Activated T-helper 2 cell treated with anti-CD3 and anti-CD28 coated beads, Interferon-gamma antibody, Interleukin-2, Interleukin-4, amounts not matched to agents 10 μg/mL and 5 μg/mL and 100 μg/mL, durations not matched to agents 14 hours and 24 hours and 36 hours (primary cell): ENCODE measurements at regions of chr12 and their contacts with region 1.

Region 1: DNA sequence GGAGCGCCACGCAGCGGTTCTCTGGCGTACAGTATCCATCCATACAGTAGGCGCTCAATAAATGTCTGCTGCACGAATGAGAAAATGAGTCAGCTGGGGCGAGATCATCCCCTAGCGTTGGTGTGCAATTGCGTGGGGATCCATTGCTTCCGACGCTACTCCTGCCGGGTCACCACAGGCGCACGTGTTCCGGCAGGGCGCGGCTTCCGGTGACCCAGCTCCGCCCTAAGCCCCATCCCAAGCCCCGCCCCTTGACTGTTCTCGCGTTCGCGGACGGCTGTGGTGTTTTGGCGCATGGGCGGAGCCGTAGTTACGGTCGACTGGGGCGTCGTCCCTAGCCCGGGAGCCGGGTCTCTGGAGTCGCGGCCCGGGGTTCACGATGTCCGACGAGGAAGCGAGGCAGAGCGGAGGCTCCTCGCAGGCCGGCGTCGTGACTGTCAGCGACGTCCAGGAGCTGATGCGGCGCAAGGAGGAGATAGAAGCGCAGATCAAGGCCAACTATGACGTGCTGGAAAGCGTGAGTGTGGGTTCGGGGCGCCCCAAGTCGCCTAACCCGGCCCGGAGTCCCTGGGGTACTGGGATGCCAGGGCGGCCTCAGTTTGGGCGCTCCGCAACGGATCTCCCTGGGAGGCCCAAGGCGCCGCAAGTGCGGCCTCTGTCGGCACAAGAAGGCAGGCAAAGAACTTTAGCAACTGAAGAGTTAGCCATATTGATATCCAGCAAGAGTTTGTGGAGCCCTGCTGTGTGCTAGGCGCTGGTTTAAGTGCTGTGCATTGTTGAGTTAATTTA is at the start of gene PSMD9:
- DNase-seq: peak; percentile 98
- H3K4me3 Mint-ChIP-seq: peak within 1 kb of the TSS; percentile 99
- H3K27ac Mint-ChIP-seq: peak within 1 kb of the TSS; percentile 99
- H3K4me1 Mint-ChIP-seq: peaks cover 22% of the 10 kb centered on the region
- H3K27me3 Mint-ChIP-seq: peaks cover 1% of the 10 kb centered on the region
- total RNA-seq, gene PSMD9: 65.2 and 71.0 TPM in 2 replicates

Region 2: DNA sequence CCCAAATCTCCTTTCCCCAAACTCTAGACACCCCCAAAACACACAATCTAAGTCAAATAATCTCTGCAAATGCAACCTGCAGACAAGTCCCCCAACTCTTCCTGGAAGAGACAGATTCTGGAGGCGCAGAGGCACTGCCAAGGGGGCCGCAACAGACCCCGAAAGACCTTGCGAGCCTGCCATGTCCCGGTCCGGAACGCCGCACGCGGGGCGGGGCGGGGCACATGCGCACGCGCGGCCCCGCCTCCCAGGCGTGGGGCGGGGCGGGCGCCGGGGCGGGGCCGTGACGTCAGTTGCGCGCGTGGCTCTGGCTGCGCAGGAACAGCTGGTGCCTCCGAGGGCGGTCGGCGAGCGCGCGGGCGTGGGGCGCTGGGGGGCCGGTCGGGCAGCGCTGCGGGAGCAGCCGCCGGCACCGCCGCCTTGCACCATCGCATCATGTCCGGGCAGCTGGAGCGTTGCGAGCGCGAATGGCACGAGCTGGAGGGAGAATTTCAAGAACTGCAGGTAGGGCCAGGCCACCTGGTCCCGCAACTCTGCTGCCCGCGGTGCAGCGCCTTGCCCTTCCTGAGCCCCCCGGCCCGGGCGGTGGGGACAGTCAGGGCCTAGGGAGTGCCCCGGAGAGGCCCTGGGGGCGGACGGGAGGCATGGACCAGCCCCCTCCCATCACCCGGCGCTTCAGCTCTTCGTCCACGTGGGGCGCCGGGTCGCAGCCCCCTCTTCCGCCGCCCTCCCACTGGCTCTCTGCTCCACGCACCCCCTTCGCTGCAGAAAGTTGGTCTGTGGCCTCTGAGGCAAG is 176.0 kb before region 1 on chr12 and contains the start of gene TMEM120B:
- intact Hi-C with region 1: loop called (anchors 10 kb)
- DNase-seq: peak; percentile 82
- H3K4me3 Mint-ChIP-seq: peak within 1 kb of the TSS; percentile 97
- H3K27ac Mint-ChIP-seq: peak within 1 kb of the TSS; percentile 85
- H3K4me1 Mint-ChIP-seq: peaks cover 18% of the 10 kb centered on the region
- H3K27me3 Mint-ChIP-seq: peaks cover 1% of the 10 kb centered on the region
- total RNA-seq, gene TMEM120B: 14.1 and 14.2 TPM in 2 replicates

Region 3: GRCh38 chr12:121802846-121803630 is 85.6 kb before region 1 on chr12:
- intact Hi-C with region 1: loop called (anchors 1 kb)
- DNase-seq: peak; percentile 90
- H3K4me3 Mint-ChIP-seq: peak overlapping the region; percentile 87
- H3K27ac Mint-ChIP-seq: peak overlapping the region; percentile 99
- H3K4me1 Mint-ChIP-seq: peaks cover 29% of the 10 kb centered on the region
- H3K27me3 Mint-ChIP-seq: no peaks in the 10 kb centered on the region

Region 4: DNA sequence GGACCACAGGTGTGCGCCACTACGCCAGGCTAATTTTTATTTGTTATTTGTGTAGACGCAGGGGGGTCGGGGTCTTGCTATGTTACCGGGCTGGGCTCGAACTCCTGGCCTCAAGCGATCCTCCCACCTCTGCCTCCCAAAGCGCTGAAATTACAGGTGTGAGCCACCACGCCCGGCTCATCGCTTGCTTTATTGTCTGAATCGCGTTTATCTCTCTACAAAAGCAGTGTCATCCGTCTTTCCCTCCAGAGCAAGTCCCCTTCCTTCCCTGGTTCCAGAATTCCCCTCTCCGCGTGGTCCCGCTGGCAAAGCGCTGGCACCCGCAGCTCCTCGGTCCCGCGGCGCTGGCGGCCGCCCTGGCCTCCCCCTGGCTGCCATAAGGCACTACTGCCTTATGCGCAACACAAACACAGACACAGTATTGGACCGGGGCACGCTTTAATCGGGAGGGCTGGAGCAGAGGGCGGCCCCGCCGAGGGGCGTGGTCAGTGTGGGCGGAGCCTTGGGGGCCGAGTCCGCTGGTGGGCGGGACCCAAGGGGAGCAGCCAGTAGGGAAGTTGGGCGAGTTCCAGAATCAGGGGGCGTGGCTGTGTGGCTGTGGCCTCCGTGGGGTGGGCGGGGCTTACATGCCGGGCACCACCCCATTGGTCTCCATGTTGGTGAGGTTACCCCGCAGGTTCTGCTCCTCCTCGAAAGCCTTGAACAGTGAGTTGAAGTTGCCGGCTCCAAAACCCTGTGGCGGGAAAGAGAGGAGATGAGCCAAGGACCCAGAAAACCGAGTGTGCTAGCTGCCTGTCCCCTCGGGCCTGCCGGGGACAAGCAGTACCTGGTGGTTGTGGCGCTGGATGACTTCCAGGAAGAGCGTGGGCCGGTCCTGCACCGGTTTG is 49.3 kb before region 1 on chr12:
- intact Hi-C with region 1: loop called (anchors 2 kb)
- DNase-seq: peak; percentile 99
- H3K4me3 Mint-ChIP-seq: peak overlapping the region; percentile 97
- H3K27ac Mint-ChIP-seq: peak overlapping the region; percentile 90
- H3K4me1 Mint-ChIP-seq: peaks cover 4% of the 10 kb centered on the region
- H3K27me3 Mint-ChIP-seq: no peaks in the 10 kb centered on the region

Region 5: GRCh38 chr12:121872546-121873215 is 16.0 kb before region 1 on chr12:
- intact Hi-C with region 1: no loop called
- DNase-seq: no peak
- H3K4me3 Mint-ChIP-seq: no peak overlapping the region
- H3K27ac Mint-ChIP-seq: no peak overlapping the region
- H3K4me1 Mint-ChIP-seq: no peaks in the 10 kb centered on the region
- H3K27me3 Mint-ChIP-seq: no peaks in the 10 kb centered on the region

Region 6: DNA sequence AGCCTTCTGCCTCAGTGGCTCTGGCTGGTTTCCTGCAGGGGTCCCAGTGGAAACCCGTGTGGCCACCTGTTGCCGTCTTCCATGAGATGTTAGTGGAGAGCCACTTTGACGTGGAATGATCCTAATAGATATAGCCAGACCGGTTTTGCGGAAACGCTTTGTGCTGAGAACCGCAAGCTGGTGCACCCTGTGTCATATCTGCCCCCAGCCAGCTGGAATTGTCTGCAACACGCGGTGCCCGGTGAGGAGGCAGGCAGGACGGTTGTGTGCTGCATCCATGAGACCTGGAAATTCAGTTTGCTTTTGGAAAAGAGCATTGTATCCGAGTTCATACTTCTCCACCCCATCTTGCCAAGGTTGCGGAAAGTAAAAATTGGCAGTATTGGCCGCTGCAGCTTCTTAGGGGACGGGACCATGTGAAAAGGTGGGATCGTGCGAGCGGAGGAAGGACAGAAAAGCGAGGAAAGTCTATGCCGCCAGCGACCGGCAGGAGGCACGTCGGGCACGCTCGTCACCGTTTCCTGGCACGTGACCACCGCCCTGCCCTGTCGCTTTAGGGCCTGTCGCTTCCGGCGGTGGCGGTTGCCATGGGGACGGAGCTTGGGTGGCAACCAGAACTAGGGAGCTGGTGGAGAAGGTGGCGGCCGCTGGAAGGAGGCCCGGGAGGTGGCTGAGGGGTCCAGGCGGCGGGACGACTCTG is 29.5 kb after region 1 on chr12 and contains the start of gene CFAP251:
- intact Hi-C with region 1: loop called (anchors 2 kb)
- DNase-seq: peak; percentile 93
- H3K4me3 Mint-ChIP-seq: peak within 1 kb of the TSS; percentile 82
- H3K27ac Mint-ChIP-seq: peak within 1 kb of the TSS; percentile 85
- H3K4me1 Mint-ChIP-seq: peaks cover 15% of the 10 kb centered on the region
- H3K27me3 Mint-ChIP-seq: no peaks in the 10 kb centered on the region
- total RNA-seq, gene CFAP251: 0.80 and 0.82 TPM in 2 replicates